ENCODE measurements at regions of chr20 and their contacts with region 1.

Region 1: GRCh38 chr20:37007898-37008649 is 56.6 kb upstream of the SAMHD1 start:
- H3K4me3 Mint-ChIP-seq: peak overlapping the region; percentile 26
- H3K27ac Mint-ChIP-seq: peak overlapping the region; percentile 89
- H3K4me1 Mint-ChIP-seq: peaks cover 34% of the 10 kb centered on the region
- H3K27me3 Mint-ChIP-seq: no peaks in the 10 kb centered on the region

Region 2: GRCh38 chr20:36951198-36951976 is 56.7 kb before region 1 on chr20 and contains the start of gene SAMHD1:
- intact Hi-C with region 1: loop called (anchors 1 kb)
- H3K4me3 Mint-ChIP-seq: peak within 1 kb of the TSS; percentile 83
- H3K27ac Mint-ChIP-seq: peak within 1 kb of the TSS; percentile 95
- H3K4me1 Mint-ChIP-seq: peaks cover 46% of the 10 kb centered on the region
- H3K27me3 Mint-ChIP-seq: no peaks in the 10 kb centered on the region

Region 3: GRCh38 chr20:36988494-36988966 is 19.5 kb before region 1 on chr20:
- intact Hi-C with region 1: loop called (anchors 2 kb)
- H3K4me3 Mint-ChIP-seq: peak overlapping the region; percentile 62
- H3K27ac Mint-ChIP-seq: peak overlapping the region; percentile 79
- H3K4me1 Mint-ChIP-seq: peaks cover 49% of the 10 kb centered on the region
- H3K27me3 Mint-ChIP-seq: no peaks in the 10 kb centered on the region

Region 4: DNA sequence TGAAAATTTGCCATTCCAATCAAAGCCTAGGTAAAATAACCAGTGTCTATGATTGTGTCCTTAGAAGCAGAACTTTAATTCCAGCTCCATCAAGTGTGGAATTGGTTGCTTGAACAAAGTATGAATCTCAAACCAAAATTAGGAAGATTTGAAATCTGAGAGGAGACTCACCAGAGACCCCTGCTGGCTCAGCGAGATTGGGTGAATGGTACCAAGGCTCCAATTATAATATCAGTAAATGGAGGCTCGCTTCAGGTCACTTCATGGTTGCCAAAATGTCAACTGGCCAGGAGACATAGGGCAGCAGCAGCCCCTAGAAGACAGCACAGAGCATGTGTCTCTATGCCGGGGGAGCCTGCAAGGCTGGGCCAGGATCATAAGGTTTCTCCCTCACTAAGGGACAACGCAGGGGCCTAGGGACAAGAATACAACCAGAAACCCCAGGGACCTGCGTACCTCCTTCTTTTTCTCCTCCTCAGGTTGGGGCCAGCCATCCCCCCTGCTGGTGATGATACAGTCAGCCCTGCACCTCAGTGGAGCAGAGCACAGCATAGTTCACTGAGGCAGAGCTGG is 73.7 kb after region 1 on chr20:
- intact Hi-C with region 1: loop called (anchors 2 kb)
- H3K4me3 Mint-ChIP-seq: no peak overlapping the region
- H3K27ac Mint-ChIP-seq: no peak overlapping the region
- H3K4me1 Mint-ChIP-seq: peaks cover 12% of the 10 kb centered on the region
- H3K27me3 Mint-ChIP-seq: no peaks in the 10 kb centered on the region

Measured in dendritic cell treated with granulocyte-macrophage colony-stimulating factor and Interleukin-4, amounts not matched to agents 40 ng/mL and 50 ng/mL, for 4 days (primary cell).